SK-N-SH (cell line): ENCODE measurements at regions of chr11 and their contacts with region 1.

Region 1: DNA sequence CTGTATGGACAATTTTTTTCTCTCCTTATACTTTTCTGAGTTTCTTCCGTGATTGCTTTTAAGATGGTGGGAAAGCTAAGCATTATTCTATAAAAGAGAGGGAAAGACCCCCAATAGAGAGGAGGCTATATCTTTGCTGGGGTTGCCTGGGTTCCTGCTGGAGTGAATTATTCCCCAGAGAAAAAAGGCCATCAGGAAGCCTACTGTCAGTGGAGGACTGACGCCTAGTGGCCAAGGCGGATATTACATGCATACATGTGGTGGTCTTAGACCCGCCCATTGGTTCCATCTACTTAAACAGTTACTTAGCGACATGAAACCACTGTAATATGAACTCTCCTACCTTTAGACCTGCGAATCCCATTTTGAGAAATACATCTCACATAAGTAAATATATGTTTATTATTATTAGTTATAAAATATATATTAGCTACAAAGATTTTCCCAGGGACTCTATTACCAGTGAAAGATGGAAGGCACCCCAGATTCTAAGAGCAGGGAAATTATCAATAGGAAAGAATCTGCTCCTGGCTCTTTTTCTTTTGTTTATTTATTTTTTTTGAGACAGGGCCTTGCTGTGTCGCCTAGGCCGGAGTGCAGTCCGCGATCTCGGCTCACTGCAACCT is 15.7 kb upstream of the PGA3 start:
- DNase-seq: peak; percentile 83
- H3K4me3 ChIP-seq: no peak overlapping the region; a peak in 1 of 4 replicates
- H3K27ac ChIP-seq: no peak overlapping the region
- H3K4me1 ChIP-seq: no peaks in the 10 kb centered on the region
- H3K27me3 ChIP-seq: no peaks in the 10 kb centered on the region; the same call in 1 of the 2 replicates
- CTCF ChIP-seq: peak; percentile 85
- EP300 ChIP-seq: no peak
- RAD21 ChIP-seq: peak; percentile 96

Region 2: GRCh38 chr11:60831143-60831500 is 356.5 kb before region 1 on chr11:
- CTCF ChIA-PET with region 1: interaction called, 34 read pairs
- POLR2A ChIA-PET with region 1: no interaction called
- DNase-seq: peak; percentile 80
- H3K4me3 ChIP-seq: peak overlapping the region in 1 of 2 experiments; percentile 6; a peak in 1 of 4 replicates
- H3K27ac ChIP-seq: no peak overlapping the region
- H3K4me1 ChIP-seq: peaks cover 0 to 16% of the 10 kb centered on the region in 2 experiments; a peak in 2 of 4 replicates
- H3K27me3 ChIP-seq: peaks cover 6% of the 10 kb centered on the region; the same call in 1 of the 2 replicates
- CTCF ChIP-seq: peak; percentile 91
- EP300 ChIP-seq: no peak
- RAD21 ChIP-seq: peak; percentile 93

Region 3: DNA sequence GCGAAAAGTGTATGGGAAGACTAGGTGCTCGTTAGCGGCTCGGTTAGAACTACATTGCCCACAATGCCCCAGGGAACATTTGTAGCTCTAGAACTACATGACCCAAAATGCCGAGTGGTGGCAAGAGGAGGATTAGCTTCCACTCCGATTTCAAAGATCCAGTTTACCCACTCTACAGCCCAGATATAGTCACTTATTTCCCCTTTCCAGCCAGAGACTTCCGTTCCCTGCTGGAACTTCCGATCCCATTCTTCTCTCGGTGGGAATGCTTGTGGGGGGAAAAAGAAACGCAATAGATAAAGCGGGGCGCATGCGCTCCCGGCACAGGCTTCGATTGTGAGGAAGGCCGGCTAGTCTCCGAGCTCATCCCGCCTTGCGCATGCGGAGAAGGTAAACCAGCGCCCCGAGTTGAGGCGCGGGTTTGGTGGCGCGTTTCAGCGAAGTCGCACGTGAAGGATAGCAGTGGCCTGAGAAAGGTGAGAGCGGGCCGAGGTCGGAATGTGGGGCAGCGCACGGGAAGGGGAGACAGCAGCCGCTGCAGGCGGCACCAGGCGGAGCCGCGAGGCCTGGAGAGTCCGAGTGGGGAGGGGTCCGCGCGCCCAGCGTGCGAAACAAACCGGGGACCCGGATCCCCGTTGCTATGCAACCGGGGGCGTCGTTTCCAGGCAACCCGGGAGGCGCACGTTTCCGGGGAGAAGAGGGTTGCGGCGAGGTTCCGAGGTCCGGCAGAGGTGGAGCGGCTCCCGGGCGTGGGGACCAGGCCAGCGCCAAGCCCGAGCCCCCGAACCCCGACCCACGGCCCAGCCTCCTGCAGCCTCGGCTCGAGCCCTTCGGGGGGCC is 273.6 kb before region 1 on chr11 and contains the start of gene TMEM109:
- CTCF ChIA-PET with region 1: interaction called, 13 read pairs
- POLR2A ChIA-PET with region 1: no interaction called
- DNase-seq: peak; percentile 94
- H3K4me3 ChIP-seq: peak within 1 kb of the TSS; percentile 80 to 87
- H3K27ac ChIP-seq: peak within 1 kb of the TSS; percentile 93 to 100
- H3K4me1 ChIP-seq: peaks cover 12 to 20% of the 10 kb centered on the region in 2 experiments; a peak in 2 of 4 replicates
- H3K27me3 ChIP-seq: no peaks in the 10 kb centered on the region; the same call in 1 of the 2 replicates
- CTCF ChIP-seq: no peak
- EP300 ChIP-seq: no peak
- RAD21 ChIP-seq: no peak
- polyA plus RNA-seq, gene TMEM109: 38.0 and 52.7 TPM in 2 replicates

Region 4: DNA sequence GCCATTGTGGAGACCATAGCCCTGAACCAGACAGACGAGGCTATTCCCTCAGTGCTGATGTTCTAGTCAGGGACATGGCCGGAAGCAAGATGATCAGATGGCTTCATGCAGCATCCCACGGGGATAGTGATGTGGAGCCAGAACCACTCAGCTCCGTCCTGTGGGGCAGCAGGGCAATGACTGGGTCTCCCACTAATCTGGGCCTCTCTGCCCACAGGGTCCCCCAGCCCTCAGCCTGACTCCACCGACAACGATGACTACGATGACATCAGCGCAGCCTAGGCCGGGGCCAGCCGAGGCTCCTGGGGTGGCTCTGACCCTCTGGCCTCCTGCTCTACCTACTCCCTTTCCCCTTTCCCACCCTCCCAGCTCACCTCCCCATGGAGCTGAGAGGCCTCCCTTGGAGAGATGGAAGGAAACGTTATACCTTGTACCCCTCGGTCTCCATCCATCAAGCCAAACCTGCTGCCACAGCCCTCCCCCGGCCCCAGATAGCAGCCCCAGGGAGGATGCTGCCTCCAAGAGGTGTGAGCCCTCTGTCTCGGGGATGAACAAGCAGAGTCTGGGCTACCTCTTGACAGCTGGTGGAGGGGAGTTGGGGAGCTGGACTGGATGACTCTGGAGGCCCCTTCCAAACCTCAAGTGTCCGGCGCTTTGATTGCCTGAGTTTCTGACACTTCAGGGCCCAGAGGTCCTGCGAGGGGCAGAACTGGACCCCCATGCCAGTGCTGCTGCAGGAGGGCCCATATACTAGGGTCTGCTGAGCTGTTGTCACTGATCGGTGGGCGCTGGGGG is 168.4 kb before region 1 on chr11:
- CTCF ChIA-PET with region 1: no interaction called
- POLR2A ChIA-PET with region 1: no interaction called
- DNase-seq: no peak
- H3K4me3 ChIP-seq: no peak overlapping the region
- H3K27ac ChIP-seq: no peak overlapping the region
- H3K4me1 ChIP-seq: no peaks in the 10 kb centered on the region; a peak in 1 of 4 replicates
- H3K27me3 ChIP-seq: no peaks in the 10 kb centered on the region
- CTCF ChIP-seq: no peak
- EP300 ChIP-seq: no peak
- RAD21 ChIP-seq: no peak

Region 5: DNA sequence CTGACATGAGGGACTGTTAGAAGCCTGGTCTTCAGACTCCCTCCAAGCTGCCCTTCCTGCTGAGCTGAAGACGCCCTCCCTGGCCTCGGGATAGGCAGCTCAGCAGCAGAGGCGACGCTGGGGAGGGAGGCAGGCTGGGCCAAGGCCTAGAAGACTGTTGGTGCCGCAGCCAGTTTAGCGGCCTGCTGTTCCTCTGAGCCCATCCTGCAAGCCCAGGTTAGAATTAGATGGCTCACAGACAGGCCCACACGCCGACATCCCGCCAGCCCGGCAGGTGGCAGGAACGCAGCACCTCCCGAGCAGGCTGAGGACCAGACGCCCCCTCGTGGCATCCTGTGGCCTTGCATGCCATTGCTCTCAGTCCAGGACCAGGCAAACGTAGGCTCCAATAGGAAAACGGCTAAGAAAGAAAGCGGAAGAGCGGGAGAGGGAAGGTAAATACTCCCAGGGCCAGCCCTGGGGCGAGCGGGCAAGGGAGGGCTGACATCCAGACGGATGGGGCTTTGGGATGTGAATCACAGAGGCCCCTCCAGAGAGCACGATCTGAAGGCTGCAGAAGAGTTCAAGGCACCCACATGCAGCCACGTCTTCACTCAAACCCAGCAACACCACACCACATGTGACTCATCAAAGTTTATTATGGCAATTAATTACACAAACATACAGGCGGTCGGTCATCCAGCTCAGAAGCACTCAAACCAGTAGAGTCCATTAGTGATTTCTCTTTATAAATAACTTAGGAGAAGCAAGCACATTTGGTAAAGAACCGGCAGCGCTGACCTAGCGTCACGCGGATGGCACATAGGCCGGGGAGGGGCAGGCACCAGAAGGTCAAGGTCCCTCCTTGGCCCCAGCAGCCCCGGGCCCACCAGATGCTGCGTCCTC is 57.7 kb before region 1 on chr11:
- CTCF ChIA-PET with region 1: interaction called, 61 read pairs
- POLR2A ChIA-PET with region 1: no interaction called
- DNase-seq: peak; percentile 96
- H3K4me3 ChIP-seq: peak overlapping the region; percentile 21 to 30; a peak in 2 of 4 replicates
- H3K27ac ChIP-seq: peak overlapping the region; percentile 35 to 51; a peak in 3 of 4 replicates
- H3K4me1 ChIP-seq: peaks cover 0 to 38% of the 10 kb centered on the region in 2 experiments; a peak in 1 of 4 replicates
- H3K27me3 ChIP-seq: no peaks in the 10 kb centered on the region
- CTCF ChIP-seq: peak; percentile 99
- EP300 ChIP-seq: 0 out of 4 replicates have a peak, but pooled peaks of 1 of the 2 experiments have one; percentile 3
- RAD21 ChIP-seq: peak; percentile 95

Region 6: GRCh38 chr11:61149624-61150619 is 37.7 kb before region 1 on chr11:
- CTCF ChIA-PET with region 1: interaction called, 10 read pairs
- POLR2A ChIA-PET with region 1: no interaction called
- DNase-seq: no peak
- H3K4me3 ChIP-seq: no peak overlapping the region
- H3K27ac ChIP-seq: peak overlapping the region in 1 of 2 experiments; percentile 39; a peak in 1 of 4 replicates
- H3K4me1 ChIP-seq: peaks cover 8 to 41% of the 10 kb centered on the region in 2 experiments; a peak in 3 of 4 replicates
- H3K27me3 ChIP-seq: no peaks in the 10 kb centered on the region
- CTCF ChIP-seq: no peak
- EP300 ChIP-seq: no peak
- RAD21 ChIP-seq: no peak

Region 7: GRCh38 chr11:61173456-61173855 is 14.2 kb before region 1 on chr11:
- CTCF ChIA-PET with region 1: interaction called, 49 read pairs
- POLR2A ChIA-PET with region 1: no interaction called
- DNase-seq: no peak
- H3K4me3 ChIP-seq: no peak overlapping the region
- H3K27ac ChIP-seq: no peak overlapping the region
- H3K4me1 ChIP-seq: no peaks in the 10 kb centered on the region
- H3K27me3 ChIP-seq: peaks cover 30% of the 10 kb centered on the region; the same call in 1 of the 2 replicates
- CTCF ChIP-seq: peak; percentile 29
- EP300 ChIP-seq: no peak
- RAD21 ChIP-seq: peak; percentile 54